ENCODE measurements at regions of chr4 and their contacts with region 1.

Region 1: GRCh38 chr4:113383111-113383785 is 333.8 kb downstream of the ANK2 start:
- DNase-seq: peak; percentile 82
- H3K4me3 ChIP-seq: no peak overlapping the region
- H3K27ac ChIP-seq: peak overlapping the region; percentile 57
- H3K4me1 ChIP-seq: peaks cover 29% of the 10 kb centered on the region
- H3K27me3 ChIP-seq: no peaks in the 10 kb centered on the region
- CTCF ChIP-seq: no peak
- POLR2A ChIP-seq: no peak

Region 2: DNA sequence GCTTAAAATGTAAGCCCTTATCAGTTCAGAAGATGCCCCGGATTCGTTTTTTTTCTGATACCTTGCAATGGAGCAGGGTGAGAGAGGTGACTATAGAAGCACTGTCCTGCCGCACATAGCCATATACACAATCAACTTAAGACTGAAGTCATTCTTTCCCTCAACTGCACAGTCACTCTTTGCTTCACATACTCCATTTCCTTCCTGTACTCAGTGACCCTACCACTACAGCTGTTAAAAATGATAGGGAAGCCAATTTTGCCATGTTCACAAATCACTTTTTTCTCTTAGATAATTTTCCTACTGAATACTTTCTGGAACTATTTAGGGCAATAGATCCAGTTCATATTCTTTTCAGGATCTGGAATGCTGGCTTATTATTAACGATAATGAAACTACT is 33.8 kb before region 1 on chr4:
- CTCF ChIA-PET with region 1: interaction called, 3 read pairs
- POLR2A ChIA-PET with region 1: interaction called, 3 read pairs
- dilution Hi-C with region 1: no loop called
- intact Hi-C with region 1: loop called (anchors 2 kb)
- DNase-seq: peak; percentile 86
- H3K4me3 ChIP-seq: peak overlapping the region in 1 of 3 experiments; percentile 0
- H3K27ac ChIP-seq: peak overlapping the region; percentile 37
- H3K4me1 ChIP-seq: peaks cover 8% of the 10 kb centered on the region
- H3K27me3 ChIP-seq: no peaks in the 10 kb centered on the region
- CTCF ChIP-seq: no peak
- POLR2A ChIP-seq: no peak

Region 3: DNA sequence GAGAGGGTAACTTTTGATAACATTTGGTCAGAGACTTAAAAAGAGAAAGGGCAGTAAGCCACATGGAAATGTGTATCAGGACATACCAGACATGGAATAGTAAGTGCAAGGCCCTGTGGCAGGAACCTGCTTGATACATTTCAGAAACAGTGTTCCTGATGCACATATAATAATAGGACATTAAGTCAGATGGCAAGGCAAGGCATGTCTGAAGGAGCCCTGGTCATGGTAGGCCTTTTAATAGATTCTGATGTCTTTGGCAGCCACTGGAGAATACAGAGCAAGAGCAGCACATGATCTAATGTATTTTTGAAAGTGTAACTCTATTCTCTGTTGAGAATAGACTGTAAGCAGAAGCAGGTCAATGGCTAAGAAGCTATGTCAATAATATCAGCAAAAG is 98.6 kb after region 1 on chr4:
- CTCF ChIA-PET with region 1: no interaction called
- POLR2A ChIA-PET with region 1: no interaction called
- dilution Hi-C with region 1: no loop called
- intact Hi-C with region 1: no loop called
- DNase-seq: no peak
- H3K4me3 ChIP-seq: no peak overlapping the region
- H3K27ac ChIP-seq: no peak overlapping the region
- H3K4me1 ChIP-seq: no peaks in the 10 kb centered on the region
- H3K27me3 ChIP-seq: no peaks in the 10 kb centered on the region
- CTCF ChIP-seq: no peak
- POLR2A ChIP-seq: no peak

Region 4: GRCh38 chr4:113878668-113879067 is 495.4 kb after region 1 on chr4:
- CTCF ChIA-PET with region 1: no interaction called
- POLR2A ChIA-PET with region 1: no interaction called
- dilution Hi-C with region 1: no loop called
- intact Hi-C with region 1: loop called (anchors 2 kb)
- DNase-seq: peak; percentile 40
- H3K4me3 ChIP-seq: no peak overlapping the region
- H3K27ac ChIP-seq: no peak overlapping the region
- H3K4me1 ChIP-seq: peaks cover 16% of the 10 kb centered on the region
- H3K27me3 ChIP-seq: no peaks in the 10 kb centered on the region
- CTCF ChIP-seq: peak; percentile 25 to 30
- POLR2A ChIP-seq: no peak